Heart right ventricle (tissue), 16 donors: ENCODE measurements at regions of chr3 and their contacts with region 1.

Region 1: GRCh38 chr3:19822805-19823204 is 111.2 kb downstream of the EFHB start:
- DNase-seq: no peak
- ATAC-seq: no peak
- H3K4me3 ChIP-seq: no peak overlapping the region
- H3K27ac ChIP-seq: no peak overlapping the region
- H3K4me1 ChIP-seq: no peaks in the 10 kb centered on the region
- H3K27me3 ChIP-seq: no peaks in the 10 kb centered on the region
- CTCF ChIP-seq: no peak

Region 2: DNA sequence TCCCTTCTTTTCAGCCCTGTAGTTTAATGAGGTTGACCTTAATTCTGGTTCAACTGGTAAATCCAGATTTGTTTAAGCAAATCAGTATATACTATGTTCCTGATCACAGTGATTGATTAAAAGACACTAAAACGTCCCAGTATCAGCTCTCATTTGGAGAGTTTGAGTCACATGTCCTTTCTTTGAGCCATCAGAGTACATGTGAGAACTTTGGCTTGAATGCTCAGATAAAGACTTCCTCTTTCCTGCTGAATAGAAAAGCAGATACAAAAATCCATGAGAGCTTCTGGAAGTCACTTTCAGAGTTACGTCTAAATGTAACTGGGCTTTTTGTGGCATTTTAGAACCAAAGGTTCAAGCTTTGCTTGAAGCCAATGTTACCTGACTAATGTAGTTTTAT is 1055.8 kb before region 1 on chr3:
- intact Hi-C with region 1: loop called in 1 of 10 experiments (anchors 5 kb)
- DNase-seq: no peak
- ATAC-seq: no peak
- H3K4me3 ChIP-seq: no peak overlapping the region
- H3K27ac ChIP-seq: no peak overlapping the region
- H3K4me1 ChIP-seq: no peaks in the 10 kb centered on the region
- H3K27me3 ChIP-seq: no peaks in the 10 kb centered on the region
- CTCF ChIP-seq: no peak

Region 3: GRCh38 chr3:19931180-19931692 is 108.4 kb after region 1 on chr3:
- intact Hi-C with region 1: no loop called
- DNase-seq: no peak
- ATAC-seq: no peak
- H3K4me3 ChIP-seq: no peak overlapping the region
- H3K27ac ChIP-seq: peak overlapping the region in 1 of 10 donors; percentile 74
- H3K4me1 ChIP-seq: peaks cover 0 to 21% (median 0%) of the 10 kb centered on the region in 9 donors
- H3K27me3 ChIP-seq: peaks cover 0 to 11% (median 4%) of the 10 kb centered on the region in 7 donors
- CTCF ChIP-seq: no peak